Right ventricle myocardium inferior (tissue), 1 donor: ENCODE measurements at regions of chr4 and their contacts with region 1.

Region 1: DNA sequence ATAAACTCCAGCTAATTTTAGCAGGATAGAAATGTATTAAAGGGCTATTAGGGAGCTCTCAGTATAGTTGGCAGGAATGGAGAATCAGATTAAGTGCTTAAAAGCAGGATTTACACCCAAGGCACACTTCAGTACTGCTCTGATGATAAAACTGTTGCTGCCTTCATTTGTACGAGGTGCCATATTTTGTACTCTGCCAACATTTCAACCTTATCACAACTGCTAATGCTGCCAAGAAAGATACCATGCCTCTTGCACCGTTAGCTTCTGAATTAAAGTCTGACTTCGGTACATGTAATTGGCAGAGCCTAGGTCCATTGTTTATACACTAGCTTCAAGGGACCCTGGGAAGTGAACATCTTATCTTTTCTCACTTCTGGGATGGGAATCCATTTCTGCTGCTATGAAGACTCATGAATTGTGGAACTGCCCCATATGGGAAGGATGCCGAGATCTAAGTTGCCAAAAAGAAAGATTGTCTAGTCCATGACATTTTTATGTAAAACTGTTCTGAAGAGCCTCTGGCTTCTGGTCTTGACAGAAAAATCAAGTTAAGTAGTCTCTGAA is 624.0 kb upstream of the IGFBP7 start:
- DNase-seq: no peak
- ATAC-seq: peak; percentile 97

Region 2: GRCh38 chr4:57501720-57502119 is 232.5 kb before region 1 on chr4:
- intact Hi-C with region 1: loop called (anchors 2 kb)
- DNase-seq: no peak
- ATAC-seq: peak; percentile 82

Region 3: GRCh38 chr4:57854748-57855147 is 120.6 kb after region 1 on chr4:
- intact Hi-C with region 1: no loop called
- DNase-seq: no peak
- ATAC-seq: no peak